Activated CD4-positive, alpha-beta T cell treated with anti-CD3 and anti-CD28 coated beads for 36 hours (primary cell): ENCODE measurements at regions of chrX and their contacts with region 1.

Region 1: DNA sequence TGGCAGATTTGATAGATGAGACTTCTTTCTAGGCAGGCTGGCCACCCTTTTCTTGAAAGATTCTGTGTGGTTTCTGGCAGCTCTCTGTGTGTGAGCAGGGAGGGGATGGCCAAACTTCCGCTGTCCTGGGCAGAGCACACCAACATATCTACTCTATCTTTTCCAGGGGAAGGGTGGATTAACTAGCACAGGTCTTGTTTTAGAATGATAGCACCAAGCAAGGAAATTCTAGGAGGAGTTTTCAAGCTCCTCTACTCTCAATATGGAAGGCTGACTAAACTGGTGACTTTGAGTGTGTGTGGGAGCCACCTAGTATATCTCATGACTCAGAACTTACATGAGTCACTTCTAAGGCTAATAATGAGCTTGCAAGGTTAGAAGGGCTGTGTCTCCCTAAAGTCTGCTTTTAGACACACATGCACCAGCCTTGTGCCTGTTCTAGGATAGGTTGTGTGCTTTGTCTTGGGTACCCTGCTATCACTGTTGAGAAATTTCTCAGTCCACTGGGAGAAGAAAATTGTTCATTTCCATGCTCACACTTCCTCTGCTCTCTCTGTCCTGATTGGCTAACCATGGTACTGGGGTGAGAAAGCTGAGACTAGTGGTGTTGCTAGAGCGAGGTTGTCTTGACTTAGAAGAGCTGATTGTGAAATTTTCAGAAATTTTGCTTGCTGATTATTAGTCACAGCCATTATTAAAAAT is 72.9 kb downstream of the YIPF6 start:
- DNase-seq: peak; percentile 25
- ATAC-seq: peak; percentile 83
- H3K4me3 Mint-ChIP-seq: no peak overlapping the region
- H3K27ac Mint-ChIP-seq: no peak overlapping the region
- H3K4me1 Mint-ChIP-seq: peaks cover 44% of the 10 kb centered on the region
- H3K27me3 Mint-ChIP-seq: no peaks in the 10 kb centered on the region

Region 2: DNA sequence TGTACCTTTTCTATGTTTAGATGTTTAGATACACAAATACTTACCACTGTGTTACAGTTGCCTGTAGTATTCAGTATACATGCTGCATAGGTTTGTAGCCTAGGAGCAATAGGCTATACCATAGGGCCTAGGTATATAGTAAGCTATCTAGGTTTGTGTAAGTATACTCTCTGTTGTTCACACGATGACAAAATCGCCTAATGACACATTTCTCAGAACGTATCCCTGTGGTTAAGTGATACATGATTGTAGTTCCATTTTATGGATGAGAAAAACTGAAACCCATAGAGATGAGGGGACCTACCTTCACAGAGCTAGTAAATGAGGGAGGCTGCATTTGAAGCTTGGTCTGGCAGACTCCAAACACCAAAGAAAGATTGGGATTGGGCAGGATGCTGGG is 177.7 kb after region 1 on chrX:
- CTCF ChIA-PET with region 1: no interaction called
- POLR2A ChIA-PET with region 1: no interaction called
- intact Hi-C with region 1: loop called in 1 of 2 experiments (anchors 1 kb)
- DNase-seq: no peak
- ATAC-seq: peak; percentile 92
- H3K4me3 Mint-ChIP-seq: no peak overlapping the region
- H3K27ac Mint-ChIP-seq: no peak overlapping the region
- H3K4me1 Mint-ChIP-seq: peaks cover 18% of the 10 kb centered on the region
- H3K27me3 Mint-ChIP-seq: no peaks in the 10 kb centered on the region